ENCODE measurements at regions of chr7 and their contacts with region 1.

Region 1: GRCh38 chr7:29207162-29207801 is 12.7 kb downstream of the CHN2 start:
- DNase-seq: no peak
- ATAC-seq: peak in 2 of 8 donors; percentile 52 to 53
- H3K4me3 ChIP-seq: no peak overlapping the region
- H3K27ac ChIP-seq: no peak overlapping the region
- H3K4me1 ChIP-seq: peaks cover 0 to 24% (median 0%) of the 10 kb centered on the region in 9 donors
- H3K27me3 ChIP-seq: no peaks in the 10 kb centered on the region
- CTCF ChIP-seq: no peak

Region 2: GRCh38 chr7:29538389-29538788 is 331.1 kb after region 1 on chr7:
- intact Hi-C with region 1: loop called in 1 of 10 experiments (anchors 5 kb)
- DNase-seq: no peak
- ATAC-seq: no peak
- H3K4me3 ChIP-seq: no peak overlapping the region
- H3K27ac ChIP-seq: no peak overlapping the region
- H3K4me1 ChIP-seq: no peaks in the 10 kb centered on the region
- H3K27me3 ChIP-seq: no peaks in the 10 kb centered on the region
- CTCF ChIP-seq: no peak

Measured in heart right ventricle (tissue), 16 donors.